AG04449 (cell line): ENCODE measurements at regions of chr16 and their contacts with region 1.

Region 1: DNA sequence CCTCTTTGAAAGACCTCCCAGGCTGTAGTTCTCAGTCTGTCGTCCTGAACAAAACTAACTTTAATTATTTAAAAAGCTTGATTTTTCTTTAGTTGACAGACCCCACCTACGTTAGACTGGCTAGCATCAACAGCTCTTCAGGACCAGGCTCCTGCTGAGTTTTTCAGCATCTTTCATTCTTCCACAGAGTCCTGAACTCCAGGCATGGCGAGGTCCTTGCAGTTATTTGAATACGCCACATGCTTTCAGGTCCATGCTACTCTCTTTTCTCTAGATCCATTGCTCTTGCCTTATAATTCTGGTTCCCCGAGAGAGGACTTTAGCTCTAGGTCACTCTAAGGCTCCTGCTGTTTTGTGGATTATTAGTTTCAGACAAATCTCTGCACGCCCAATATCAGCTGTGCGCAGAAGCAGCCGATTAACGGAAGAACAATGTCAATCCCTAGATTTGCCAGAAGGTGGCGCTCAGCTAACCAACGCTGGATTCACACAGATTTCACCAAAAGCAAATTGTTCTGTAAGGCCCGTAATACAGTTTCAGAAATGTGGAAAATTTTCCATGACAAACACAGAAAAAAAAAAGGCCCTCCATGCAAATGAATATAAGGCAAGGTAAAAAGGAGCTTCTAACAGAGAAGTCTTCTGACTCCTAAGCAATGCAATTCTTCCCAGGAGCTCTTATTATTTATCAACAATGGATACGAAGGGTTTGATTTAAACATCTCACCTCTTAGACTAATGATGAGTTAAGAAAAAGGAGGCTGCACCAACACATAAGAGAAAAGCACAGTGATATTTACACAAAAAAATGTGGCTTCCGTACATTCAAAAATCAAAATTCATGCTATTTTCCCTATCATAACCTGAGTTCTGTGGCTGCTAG is 33.5 kb upstream of the BCO1 start:
- DNase-seq: peak; percentile 9
- H3K4me3 ChIP-seq: no peak overlapping the region
- CTCF ChIP-seq: peak; percentile 71

Region 2: GRCh38 chr16:81189100-81189664 is 15.9 kb before region 1 on chr16:
- CTCF ChIA-PET with region 1: interaction called, 40 read pairs
- POLR2A ChIA-PET with region 1: no interaction called
- DNase-seq: no peak
- H3K4me3 ChIP-seq: no peak overlapping the region
- CTCF ChIP-seq: no peak